SK-N-SH (cell line): ENCODE measurements at regions of chr22 and their contacts with region 1.

Region 1: DNA sequence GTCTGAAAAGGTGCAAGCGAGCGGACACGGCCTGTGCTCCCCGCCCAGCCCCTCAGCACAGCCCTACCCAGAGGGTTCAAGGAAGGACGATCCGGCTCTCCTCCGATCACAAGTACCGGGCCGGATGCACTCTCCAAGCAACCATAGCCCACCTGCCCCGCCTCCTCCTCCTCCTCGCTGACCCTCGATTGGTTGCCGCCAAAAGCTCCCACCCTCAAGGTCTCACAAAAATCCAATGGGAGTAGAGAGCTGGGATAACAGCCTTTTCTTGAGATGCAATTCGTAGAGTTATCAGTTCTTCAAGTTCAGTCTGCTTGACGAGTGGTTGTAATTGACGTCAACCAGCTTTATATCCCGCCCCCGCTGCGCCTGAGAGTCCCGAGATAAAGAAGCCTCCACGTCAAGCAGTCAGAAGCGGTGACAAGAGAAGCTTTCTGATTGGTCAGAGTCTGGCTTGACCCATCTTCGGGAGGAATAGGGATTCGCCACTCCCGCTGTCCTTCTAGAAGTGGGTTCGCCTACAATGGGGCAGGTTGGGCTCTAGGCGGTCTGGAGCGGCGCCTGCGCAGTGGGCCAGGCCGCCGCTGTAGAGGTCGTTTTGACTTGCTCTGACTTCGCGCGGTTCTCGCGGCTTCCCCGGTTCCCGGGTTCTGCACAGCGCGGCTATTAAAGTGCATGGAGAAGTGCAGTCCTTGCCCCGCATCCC is at the start of gene IFT27:
- DNase-seq: peak; percentile 99
- H3K4me3 ChIP-seq: peak within 1 kb of the TSS; percentile 84 to 86
- H3K27ac ChIP-seq: peak within 1 kb of the TSS in 1 of 2 experiments; percentile 76; a peak in 2 of 4 replicates
- H3K4me1 ChIP-seq: peaks cover 0 to 10% of the 10 kb centered on the region in 2 experiments; a peak in 3 of 4 replicates
- H3K27me3 ChIP-seq: no peaks in the 10 kb centered on the region
- CTCF ChIP-seq: no peak
- EP300 ChIP-seq: no peak
- RAD21 ChIP-seq: no peak
- polyA plus RNA-seq, gene IFT27: 29.4 and 31.5 TPM in 2 replicates

Region 2: DNA sequence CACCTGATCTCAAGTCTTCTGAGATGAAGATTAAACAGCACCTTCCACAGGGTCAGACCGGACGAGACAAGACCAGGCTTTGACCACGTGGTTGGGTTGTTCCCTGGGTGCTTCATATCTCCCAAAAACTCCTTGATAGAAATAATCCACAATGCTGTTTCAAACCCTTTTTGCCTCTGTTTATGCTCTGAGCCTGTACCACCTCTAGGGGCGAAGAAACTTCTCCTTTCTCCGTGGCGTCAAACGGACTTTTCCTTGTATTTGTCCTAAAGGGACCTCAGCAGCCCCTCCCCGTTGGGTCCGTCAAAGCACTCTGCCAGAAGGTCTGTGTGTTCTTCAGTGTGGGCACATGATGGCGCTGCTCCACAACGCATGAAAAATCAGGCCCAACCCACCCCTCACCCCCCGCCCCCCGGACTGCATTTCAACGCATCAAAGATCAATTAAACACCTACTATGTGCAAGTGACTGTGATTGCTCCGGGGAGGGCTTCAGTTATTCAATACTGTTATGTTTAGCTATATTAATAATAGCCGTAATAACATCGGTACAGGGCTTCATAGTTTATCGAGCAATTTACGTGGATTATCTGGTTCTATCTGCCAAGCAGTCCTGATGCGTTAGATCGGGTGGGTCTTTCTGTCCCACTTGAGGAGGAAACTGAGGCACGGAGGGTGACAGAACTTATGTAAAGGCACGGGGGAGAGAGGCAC is 229.9 kb before region 1 on chr22:
- CTCF ChIA-PET with region 1: interaction called, 55 read pairs
- POLR2A ChIA-PET with region 1: no interaction called
- DNase-seq: peak; percentile 86
- H3K4me3 ChIP-seq: no peak overlapping the region
- H3K27ac ChIP-seq: no peak overlapping the region
- H3K4me1 ChIP-seq: peaks cover 2% of the 10 kb centered on the region in 2 experiments; a peak in 1 of 4 replicates
- H3K27me3 ChIP-seq: peaks cover 9% of the 10 kb centered on the region
- CTCF ChIP-seq: peak; percentile 65
- EP300 ChIP-seq: no peak
- RAD21 ChIP-seq: peak; percentile 84

Region 3: DNA sequence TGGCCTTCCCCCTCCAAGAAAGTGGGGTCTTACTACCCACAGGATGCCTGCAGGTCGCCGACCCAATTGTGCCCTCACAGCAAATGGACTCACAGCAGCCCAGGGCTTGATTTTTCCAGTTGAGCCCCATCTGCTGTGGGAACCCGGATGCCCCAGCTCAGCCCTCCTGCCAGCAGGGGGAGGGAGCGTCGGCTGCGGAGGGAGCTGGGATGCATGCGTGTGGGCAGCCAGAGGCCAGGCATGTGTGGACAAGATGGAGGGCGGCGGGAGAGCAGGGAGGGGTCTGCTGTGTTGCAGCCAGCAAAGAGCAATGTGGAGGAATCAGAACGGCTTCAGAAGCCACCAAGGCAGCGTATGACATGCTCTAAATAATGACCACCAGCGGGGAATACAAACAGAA is 206.1 kb before region 1 on chr22:
- CTCF ChIA-PET with region 1: interaction called, 12 read pairs
- POLR2A ChIA-PET with region 1: no interaction called
- DNase-seq: peak; percentile 76
- H3K4me3 ChIP-seq: no peak overlapping the region; a peak in 1 of 4 replicates
- H3K27ac ChIP-seq: no peak overlapping the region
- H3K4me1 ChIP-seq: no peaks in the 10 kb centered on the region
- H3K27me3 ChIP-seq: no peaks in the 10 kb centered on the region; the same call in 1 of the 2 replicates
- CTCF ChIP-seq: peak; percentile 21
- EP300 ChIP-seq: no peak
- RAD21 ChIP-seq: peak; percentile 44

Region 4: GRCh38 chr22:36762687-36763260 is 13.3 kb before region 1 on chr22:
- CTCF ChIA-PET with region 1: interaction called, 17 read pairs
- POLR2A ChIA-PET with region 1: interaction called, 11 read pairs
- DNase-seq: no peak
- H3K4me3 ChIP-seq: no peak overlapping the region
- H3K27ac ChIP-seq: no peak overlapping the region
- H3K4me1 ChIP-seq: peaks cover 0 to 2% of the 10 kb centered on the region in 2 experiments; a peak in 1 of 4 replicates
- H3K27me3 ChIP-seq: no peaks in the 10 kb centered on the region
- CTCF ChIP-seq: no peak
- EP300 ChIP-seq: no peak
- RAD21 ChIP-seq: no peak